CD8-positive, alpha-beta memory T cell (primary cell): ENCODE measurements at regions of chr16 and their contacts with region 1.

Region 1: DNA sequence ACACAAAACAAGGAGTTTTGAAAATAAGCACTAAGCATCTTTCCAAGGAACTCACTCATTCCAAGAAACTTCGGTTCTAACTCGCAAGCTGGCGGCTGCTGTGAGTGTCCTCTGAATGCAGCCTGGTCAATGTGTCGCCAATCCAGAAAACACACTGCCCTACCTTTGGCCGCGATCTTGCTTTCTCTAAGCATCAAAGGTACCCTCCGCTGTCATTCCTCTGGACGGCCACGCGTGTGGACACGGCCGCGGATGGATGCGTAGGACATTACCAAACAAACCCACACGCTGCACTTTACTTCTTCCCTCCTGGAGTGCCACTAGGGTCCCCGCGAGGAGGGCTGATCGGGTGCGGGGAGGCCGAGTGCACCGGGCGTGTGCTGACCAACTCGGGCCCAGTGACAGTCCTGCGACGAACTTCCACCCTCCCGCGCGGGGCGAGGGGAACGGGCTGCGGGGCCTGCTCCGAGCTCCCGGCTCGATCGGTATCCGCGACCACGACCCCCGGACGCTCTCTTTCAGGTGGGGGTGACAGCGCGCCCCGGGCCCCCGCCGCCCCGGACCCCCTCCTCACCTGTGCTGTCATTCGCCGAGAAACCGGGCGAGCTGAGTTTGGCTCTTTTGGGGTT is 1.1 kb downstream of the CREBBP start:
- DNase-seq: no peak
- H3K4me3 ChIP-seq: peak overlapping the region; percentile 78
- H3K4me3 Mint-ChIP-seq: peak overlapping the region; percentile 89 to 97 (median 91)
- H3K27ac ChIP-seq: peak overlapping the region; percentile 7
- H3K27ac Mint-ChIP-seq: peak overlapping the region; percentile 27 to 95 (median 92)
- H3K4me1 ChIP-seq: peaks cover 50% of the 10 kb centered on the region
- H3K4me1 Mint-ChIP-seq: peaks cover 50 to 59% (median 54%) of the 10 kb centered on the region in 3 donors
- H3K27me3 ChIP-seq: no peaks in the 10 kb centered on the region
- H3K27me3 Mint-ChIP-seq: peaks cover 4 to 5% of the 10 kb centered on the region in 2 donors

Region 2: DNA sequence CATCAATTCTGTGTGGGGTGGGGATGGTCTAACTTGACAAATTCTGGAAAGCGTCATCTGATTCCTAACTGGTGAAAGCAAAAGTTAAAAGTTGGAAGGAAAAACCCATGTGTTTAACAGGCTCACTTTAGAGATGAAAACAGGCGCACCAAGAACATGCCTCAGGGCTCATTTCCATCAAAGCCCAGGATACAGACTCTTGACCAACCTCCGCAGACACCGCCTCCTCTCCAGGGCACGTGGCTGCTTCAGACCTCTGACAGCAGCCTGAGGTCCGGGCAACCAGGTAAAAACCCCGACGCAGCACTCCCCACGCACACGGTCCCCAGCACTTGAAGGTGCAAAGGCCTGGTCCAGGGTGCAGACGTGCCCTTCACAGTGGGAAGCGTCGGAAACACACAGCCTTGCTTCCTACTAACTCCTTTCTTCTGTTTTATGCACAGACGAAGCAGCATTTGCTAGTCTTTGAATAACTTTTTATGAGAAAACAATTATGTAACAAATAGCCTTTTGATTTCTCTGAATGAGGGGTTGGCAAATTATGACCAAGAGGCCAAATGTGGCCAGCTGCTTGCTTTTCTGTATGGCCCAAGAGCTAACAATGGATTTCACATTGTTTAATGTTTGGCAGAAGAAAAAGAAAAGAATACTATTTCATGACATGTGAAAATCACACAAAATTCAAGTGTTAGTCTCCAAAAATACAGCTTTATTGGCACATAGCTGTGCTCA is 117.8 kb before region 1 on chr16:
- CTCF ChIA-PET with region 1: no interaction called
- POLR2A ChIA-PET with region 1: no interaction called
- DNase-seq: no peak
- H3K4me3 ChIP-seq: no peak overlapping the region
- H3K4me3 Mint-ChIP-seq: peak overlapping the region in 1 of 7 donors; percentile 23
- H3K27ac ChIP-seq: no peak overlapping the region
- H3K27ac Mint-ChIP-seq: peak overlapping the region in 1 of 8 donors; percentile 1
- H3K4me1 ChIP-seq: no peaks in the 10 kb centered on the region
- H3K4me1 Mint-ChIP-seq: no peaks in the 10 kb centered on the region
- H3K27me3 ChIP-seq: no peaks in the 10 kb centered on the region
- H3K27me3 Mint-ChIP-seq: no peaks in the 10 kb centered on the region

Region 3: DNA sequence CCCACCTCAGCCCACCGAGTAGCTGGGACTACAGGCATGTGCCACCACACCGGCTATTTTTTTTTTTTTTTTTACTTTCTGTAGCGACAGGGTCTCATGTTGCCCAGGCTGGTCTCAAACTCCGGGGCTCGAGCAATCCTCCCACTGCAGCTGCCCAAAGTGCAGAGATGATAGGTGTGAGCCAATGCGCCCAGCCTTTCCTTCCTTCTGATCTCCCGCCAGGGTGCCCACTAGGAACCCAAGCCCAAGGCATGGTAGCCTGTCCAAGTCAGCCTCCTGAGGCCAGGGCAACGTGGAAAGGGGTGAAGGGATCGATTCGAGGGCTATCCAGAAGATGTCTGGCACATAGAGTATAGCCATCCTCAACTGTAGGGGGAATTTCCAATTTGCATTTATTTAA is 10.7 kb after region 1 on chr16:
- CTCF ChIA-PET with region 1: interaction called, 3 read pairs
- POLR2A ChIA-PET with region 1: interaction called, 10 read pairs
- DNase-seq: no peak
- H3K4me3 ChIP-seq: no peak overlapping the region
- H3K4me3 Mint-ChIP-seq: no peak overlapping the region
- H3K27ac ChIP-seq: no peak overlapping the region
- H3K27ac Mint-ChIP-seq: no peak overlapping the region
- H3K4me1 ChIP-seq: no peaks in the 10 kb centered on the region
- H3K4me1 Mint-ChIP-seq: no peaks in the 10 kb centered on the region
- H3K27me3 ChIP-seq: peaks cover 3% of the 10 kb centered on the region
- H3K27me3 Mint-ChIP-seq: peaks cover 12 to 17% of the 10 kb centered on the region in 2 donors